HCT116 (cell line): ENCODE measurements at regions of chr13 and their contacts with region 1.

Region 1: DNA sequence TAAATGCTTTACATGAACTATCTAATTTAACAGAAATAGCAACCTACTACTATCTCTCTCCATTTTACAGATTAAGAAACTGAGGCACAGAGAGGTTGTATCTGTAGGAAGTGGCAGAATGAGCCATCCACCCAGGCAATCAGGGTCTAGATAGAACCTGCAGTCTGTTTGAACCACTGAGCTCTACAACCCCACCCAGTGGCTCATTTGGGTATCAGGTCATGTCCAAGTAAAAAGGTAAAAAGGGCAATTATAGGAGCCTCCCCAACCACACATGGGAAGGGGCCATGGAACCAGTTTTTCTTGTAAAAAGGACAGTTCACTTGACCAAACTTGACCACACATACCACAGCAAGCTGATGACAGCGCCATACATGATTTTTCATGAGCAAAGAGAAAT is 92.9 kb upstream of the SGCG start:
- DNase-seq: peak; percentile 35
- ATAC-seq: peak; percentile 91
- H3K4me3 ChIP-seq: no peak overlapping the region
- H3K27ac ChIP-seq: no peak overlapping the region
- H3K4me1 ChIP-seq: no peaks in the 10 kb centered on the region
- H3K27me3 ChIP-seq: no peaks in the 10 kb centered on the region
- CTCF ChIP-seq: peak in 2 of 3 experiments; percentile 71 to 73; a peak in 4 of 6 replicates
- POLR2A ChIP-seq: no peak
- RAD21 ChIP-seq: 0 out of 2 replicates have a peak, but pooled peaks have one; percentile 9

Region 2: GRCh38 chr13:23098161-23098907 is 10.5 kb after region 1 on chr13:
- CTCF ChIA-PET with region 1: interaction called, 12 read pairs
- POLR2A ChIA-PET with region 1: no interaction called
- RAD21 ChIA-PET with region 1: no interaction called
- intact Hi-C with region 1: no loop called
- DNase-seq: no peak
- ATAC-seq: no peak
- H3K4me3 ChIP-seq: no peak overlapping the region
- H3K27ac ChIP-seq: no peak overlapping the region
- H3K4me1 ChIP-seq: no peaks in the 10 kb centered on the region
- H3K27me3 ChIP-seq: no peaks in the 10 kb centered on the region
- CTCF ChIP-seq: no peak
- POLR2A ChIP-seq: no peak
- RAD21 ChIP-seq: no peak

Region 3: GRCh38 chr13:23105051-23105450 is 17.2 kb after region 1 on chr13:
- CTCF ChIA-PET with region 1: interaction called, 10 read pairs
- POLR2A ChIA-PET with region 1: no interaction called
- RAD21 ChIA-PET with region 1: no interaction called
- intact Hi-C with region 1: no loop called
- DNase-seq: no peak
- ATAC-seq: no peak
- H3K4me3 ChIP-seq: no peak overlapping the region
- H3K27ac ChIP-seq: no peak overlapping the region
- H3K4me1 ChIP-seq: no peaks in the 10 kb centered on the region
- H3K27me3 ChIP-seq: no peaks in the 10 kb centered on the region
- CTCF ChIP-seq: no peak
- POLR2A ChIP-seq: no peak
- RAD21 ChIP-seq: no peak